MCF 10A (cell line): ENCODE measurements at regions of chr6 and their contacts with region 1.

Region 1: GRCh38 chr6:30616811-30617564 is at the start of gene PPP1R10:
- DNase-seq: peak; percentile 100
- H3K4me3 Mint-ChIP-seq: peak within 1 kb of the TSS; percentile 83
- H3K27ac Mint-ChIP-seq: peak within 1 kb of the TSS; percentile 99
- H3K4me1 Mint-ChIP-seq: peaks cover 26% of the 10 kb centered on the region
- H3K27me3 Mint-ChIP-seq: no peaks in the 10 kb centered on the region
- CTCF ChIP-seq: no peak
- total RNA-seq, gene PPP1R10: 103 and 209 TPM in 2 replicates

Region 2: DNA sequence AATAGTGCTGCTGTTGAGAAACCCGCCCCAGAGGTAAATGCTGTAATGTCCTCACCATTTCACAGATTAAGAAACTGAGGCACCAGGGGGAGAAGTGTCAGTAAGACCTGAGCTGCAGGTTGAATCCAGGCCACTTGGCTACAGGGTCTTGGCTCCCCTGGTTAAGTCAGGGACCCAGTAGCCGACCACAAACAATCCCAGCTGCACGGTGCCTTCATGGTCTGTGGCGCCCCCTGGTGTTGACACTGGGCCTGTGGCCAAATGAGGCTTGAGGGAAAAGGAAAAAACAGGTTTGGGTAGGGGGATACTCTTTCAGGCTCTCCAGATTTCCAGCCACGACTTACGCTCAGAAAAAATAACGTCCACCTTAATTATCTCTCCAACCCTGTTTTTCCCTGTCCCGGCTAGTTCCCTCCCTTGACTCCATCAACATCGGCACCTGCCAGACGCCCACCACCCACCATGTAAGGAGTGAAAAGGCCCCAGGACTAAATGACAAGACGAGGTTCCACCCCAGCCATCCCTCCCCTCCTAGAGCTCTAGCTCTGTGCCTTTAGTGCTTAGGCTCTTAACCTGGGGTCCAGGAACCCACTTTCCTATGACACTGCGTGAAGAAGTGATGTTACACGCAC is 603.6 kb before region 1 on chr6:
- CTCF ChIA-PET with region 1: no interaction called
- POLR2A ChIA-PET with region 1: no interaction called
- intact Hi-C with region 1: no loop called
- DNase-seq: peak; percentile 19
- H3K4me3 Mint-ChIP-seq: no peak overlapping the region
- H3K27ac Mint-ChIP-seq: no peak overlapping the region
- H3K4me1 Mint-ChIP-seq: no peaks in the 10 kb centered on the region
- H3K27me3 Mint-ChIP-seq: no peaks in the 10 kb centered on the region
- CTCF ChIP-seq: peak; percentile 71

Region 3: DNA sequence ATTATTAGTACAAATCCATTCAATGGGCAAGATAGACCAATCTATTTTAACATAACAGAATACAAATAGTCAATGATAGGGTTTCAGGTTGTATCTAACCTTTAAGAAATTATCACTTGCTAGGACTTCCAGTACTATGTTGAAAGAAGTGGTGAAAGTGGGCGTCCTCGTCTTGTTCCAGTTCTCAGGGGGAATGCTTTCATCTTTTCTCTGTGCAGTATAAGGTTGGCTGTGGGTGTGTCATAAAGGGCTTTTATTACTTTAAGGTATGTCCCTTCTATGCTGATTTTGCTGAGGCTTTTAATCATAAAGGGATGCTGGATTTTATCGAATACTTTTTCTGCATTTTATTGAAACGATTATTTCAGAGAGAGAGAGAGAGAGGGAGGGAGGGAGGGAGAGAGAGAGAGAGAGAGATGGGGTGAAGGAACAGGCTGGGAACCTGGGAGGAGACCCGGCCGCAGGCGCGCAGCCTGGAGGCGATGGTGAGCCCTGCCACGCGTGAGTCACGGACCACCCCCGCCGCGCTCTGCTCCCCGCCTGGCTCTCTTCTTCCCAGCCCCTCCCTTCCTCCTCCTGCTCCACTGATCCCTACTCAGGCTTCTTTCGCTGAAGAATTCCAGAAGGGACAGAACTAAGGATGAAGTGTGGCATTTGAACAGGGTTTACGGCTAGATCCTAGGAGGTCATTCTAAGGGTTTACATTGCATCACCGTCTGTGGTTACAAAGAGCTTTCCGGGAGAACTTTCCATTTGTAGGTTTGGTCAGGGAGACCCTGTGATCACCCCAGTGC is 173.1 kb before region 1 on chr6:
- CTCF ChIA-PET with region 1: no interaction called
- POLR2A ChIA-PET with region 1: no interaction called
- intact Hi-C with region 1: no loop called
- DNase-seq: peak; percentile 31
- H3K4me3 Mint-ChIP-seq: peak overlapping the region; percentile 36
- H3K27ac Mint-ChIP-seq: no peak overlapping the region
- H3K4me1 Mint-ChIP-seq: peaks cover 9% of the 10 kb centered on the region
- H3K27me3 Mint-ChIP-seq: peaks cover 99% of the 10 kb centered on the region
- CTCF ChIP-seq: no peak

Region 4: GRCh38 chr6:30590994-30591393 is 26.0 kb before region 1 on chr6:
- CTCF ChIA-PET with region 1: interaction called, 14 read pairs
- POLR2A ChIA-PET with region 1: interaction called, 107 read pairs
- intact Hi-C with region 1: no loop called
- DNase-seq: no peak
- H3K4me3 Mint-ChIP-seq: no peak overlapping the region
- H3K27ac Mint-ChIP-seq: no peak overlapping the region
- H3K4me1 Mint-ChIP-seq: no peaks in the 10 kb centered on the region
- H3K27me3 Mint-ChIP-seq: no peaks in the 10 kb centered on the region
- CTCF ChIP-seq: no peak

Region 5: GRCh38 chr6:30646458-30647241 is 29.7 kb after region 1 on chr6 and contains the start of gene C6orf136:
- CTCF ChIA-PET with region 1: interaction called, 3 read pairs
- POLR2A ChIA-PET with region 1: interaction called, 38 read pairs
- intact Hi-C with region 1: no loop called
- DNase-seq: peak; percentile 91
- H3K4me3 Mint-ChIP-seq: peak within 1 kb of the TSS; percentile 81
- H3K27ac Mint-ChIP-seq: peak within 1 kb of the TSS; percentile 71
- H3K4me1 Mint-ChIP-seq: peaks cover 14% of the 10 kb centered on the region
- H3K27me3 Mint-ChIP-seq: no peaks in the 10 kb centered on the region
- CTCF ChIP-seq: no peak
- total RNA-seq, gene C6orf136: 10.3 and 15.7 TPM in 2 replicates

Region 6: GRCh38 chr6:30686908-30687658 is 70.1 kb after region 1 on chr6:
- CTCF ChIA-PET with region 1: interaction called, 3 read pairs
- POLR2A ChIA-PET with region 1: interaction called, 19 read pairs
- intact Hi-C with region 1: no loop called
- DNase-seq: peak; percentile 96
- H3K4me3 Mint-ChIP-seq: peak overlapping the region; percentile 94
- H3K27ac Mint-ChIP-seq: peak overlapping the region; percentile 80
- H3K4me1 Mint-ChIP-seq: peaks cover 66% of the 10 kb centered on the region
- H3K27me3 Mint-ChIP-seq: no peaks in the 10 kb centered on the region
- CTCF ChIP-seq: no peak

Region 7: DNA sequence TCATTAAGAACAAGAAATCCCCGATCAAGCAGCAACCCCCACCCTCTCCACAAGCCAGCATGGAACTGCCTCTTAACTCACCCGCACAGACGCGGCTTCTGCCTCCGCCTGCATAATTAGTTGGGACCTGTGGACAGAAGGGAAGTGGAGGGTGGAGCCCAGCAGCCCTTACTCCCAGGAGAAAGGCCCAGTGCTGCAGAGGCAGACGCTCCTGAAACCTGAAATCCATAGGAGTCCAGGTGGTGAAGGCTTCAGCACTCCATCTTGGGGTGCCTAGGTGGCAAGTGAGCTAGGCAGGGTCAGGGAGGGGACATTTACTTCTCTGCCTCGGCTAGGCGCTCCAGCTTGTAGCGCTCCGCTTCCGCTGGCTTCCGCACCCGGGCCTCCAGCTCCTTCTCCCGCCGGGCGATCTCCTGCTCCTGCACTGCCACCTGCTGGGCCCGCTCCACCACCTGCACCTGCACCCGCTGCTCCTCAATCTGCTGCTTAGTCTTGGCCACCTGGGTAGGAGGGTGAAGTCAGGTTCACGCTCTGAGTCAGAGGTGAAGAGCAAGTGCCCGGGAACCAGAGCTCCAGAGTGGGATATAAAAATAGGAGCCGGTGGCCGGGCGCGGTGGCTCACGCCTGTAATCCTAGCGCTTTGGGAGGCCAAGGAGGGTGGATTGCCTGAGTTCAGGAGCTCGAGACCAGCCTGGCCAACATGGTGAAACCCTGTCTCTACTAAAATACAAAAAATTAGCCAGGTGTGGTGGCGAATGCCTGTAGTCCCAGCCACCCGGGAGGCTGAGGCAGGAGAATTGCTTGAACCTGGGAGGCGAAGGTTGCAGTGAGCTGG is 113.8 kb after region 1 on chr6:
- CTCF ChIA-PET with region 1: interaction called, 16 read pairs
- POLR2A ChIA-PET with region 1: interaction called, 88 read pairs
- intact Hi-C with region 1: no loop called
- DNase-seq: peak; percentile 91
- H3K4me3 Mint-ChIP-seq: no peak overlapping the region
- H3K27ac Mint-ChIP-seq: no peak overlapping the region
- H3K4me1 Mint-ChIP-seq: peaks cover 7% of the 10 kb centered on the region
- H3K27me3 Mint-ChIP-seq: no peaks in the 10 kb centered on the region
- CTCF ChIP-seq: peak; percentile 86